HEK293 (cell line): ENCODE measurements at regions of chr17 and their contacts with region 1.

Region 1: GRCh38 chr17:28693869-28694268 is 17.8 kb downstream of the PROCA1 start:
- H3K4me3 ChIP-seq: no peak overlapping the region
- H3K27ac ChIP-seq: no peak overlapping the region
- H3K4me1 ChIP-seq: no peaks in the 10 kb centered on the region
- CTCF ChIP-seq: no peak

Region 2: GRCh38 chr17:28710861-28711722 is 17.2 kb after region 1 on chr17:
- CTCF ChIA-PET with region 1: interaction called, 3 read pairs
- POLR2A ChIA-PET with region 1: interaction called, 10 read pairs
- H3K4me3 ChIP-seq: peak overlapping the region; percentile 51
- H3K27ac ChIP-seq: peak overlapping the region; percentile 89
- H3K4me1 ChIP-seq: peaks cover 3% of the 10 kb centered on the region
- CTCF ChIP-seq: no peak

Region 3: DNA sequence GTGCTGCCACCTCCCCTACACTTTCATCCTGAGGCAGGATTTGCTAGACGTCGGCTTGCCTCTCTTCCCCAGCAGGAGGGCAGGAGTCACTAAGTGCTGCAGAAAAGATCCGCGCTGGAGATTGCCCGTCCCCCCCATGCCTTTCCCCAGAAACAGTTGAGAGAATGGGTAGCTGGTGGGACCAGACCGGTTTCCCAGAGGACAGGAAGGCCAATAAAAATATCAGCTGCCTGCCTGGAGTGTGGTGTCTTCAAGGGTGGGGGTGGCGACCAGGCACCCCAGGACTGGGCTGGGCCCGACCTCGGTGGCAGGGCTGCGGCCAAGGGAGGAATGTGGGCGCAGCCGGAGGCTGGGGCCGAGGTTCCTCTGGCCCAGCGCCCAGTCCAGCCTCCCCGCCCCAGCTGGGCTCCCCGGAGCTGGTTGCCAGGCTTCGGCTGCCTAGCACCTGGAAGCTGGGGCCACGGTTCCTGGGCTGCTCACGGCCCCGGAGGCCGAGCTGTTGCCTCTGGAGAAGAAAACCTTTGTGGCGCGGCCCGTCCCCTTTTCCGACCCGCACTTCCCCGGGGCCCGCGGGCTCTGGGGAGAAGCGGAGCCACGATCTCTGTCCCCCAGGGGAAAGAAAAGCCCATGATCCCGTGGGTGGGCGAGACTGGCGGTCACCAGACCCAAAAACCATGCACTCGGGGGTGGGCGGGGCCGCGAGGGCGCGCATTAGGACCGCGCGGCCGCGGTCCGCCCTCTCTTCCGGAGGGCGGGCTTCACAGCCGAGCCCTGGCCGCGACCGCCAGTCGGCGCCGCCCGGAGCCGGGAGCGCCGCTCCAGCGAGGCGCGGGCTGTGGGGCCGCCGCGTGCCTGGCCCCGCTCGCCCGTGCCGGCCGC is 49.6 kb after region 1 on chr17 and contains the start of gene TRAF4:
- CTCF ChIA-PET with region 1: no interaction called
- POLR2A ChIA-PET with region 1: no interaction called
- H3K4me3 ChIP-seq: peak within 1 kb of the TSS; percentile 69
- H3K27ac ChIP-seq: peak within 1 kb of the TSS; percentile 94
- H3K4me1 ChIP-seq: peaks cover 11% of the 10 kb centered on the region; the same call in 1 of the 2 replicates
- CTCF ChIP-seq: 0 out of 2 replicates have a peak, but pooled peaks have one; percentile 3